HEK293 (cell line): ENCODE measurements at regions of chr14 and their contacts with region 1.

Region 1: DNA sequence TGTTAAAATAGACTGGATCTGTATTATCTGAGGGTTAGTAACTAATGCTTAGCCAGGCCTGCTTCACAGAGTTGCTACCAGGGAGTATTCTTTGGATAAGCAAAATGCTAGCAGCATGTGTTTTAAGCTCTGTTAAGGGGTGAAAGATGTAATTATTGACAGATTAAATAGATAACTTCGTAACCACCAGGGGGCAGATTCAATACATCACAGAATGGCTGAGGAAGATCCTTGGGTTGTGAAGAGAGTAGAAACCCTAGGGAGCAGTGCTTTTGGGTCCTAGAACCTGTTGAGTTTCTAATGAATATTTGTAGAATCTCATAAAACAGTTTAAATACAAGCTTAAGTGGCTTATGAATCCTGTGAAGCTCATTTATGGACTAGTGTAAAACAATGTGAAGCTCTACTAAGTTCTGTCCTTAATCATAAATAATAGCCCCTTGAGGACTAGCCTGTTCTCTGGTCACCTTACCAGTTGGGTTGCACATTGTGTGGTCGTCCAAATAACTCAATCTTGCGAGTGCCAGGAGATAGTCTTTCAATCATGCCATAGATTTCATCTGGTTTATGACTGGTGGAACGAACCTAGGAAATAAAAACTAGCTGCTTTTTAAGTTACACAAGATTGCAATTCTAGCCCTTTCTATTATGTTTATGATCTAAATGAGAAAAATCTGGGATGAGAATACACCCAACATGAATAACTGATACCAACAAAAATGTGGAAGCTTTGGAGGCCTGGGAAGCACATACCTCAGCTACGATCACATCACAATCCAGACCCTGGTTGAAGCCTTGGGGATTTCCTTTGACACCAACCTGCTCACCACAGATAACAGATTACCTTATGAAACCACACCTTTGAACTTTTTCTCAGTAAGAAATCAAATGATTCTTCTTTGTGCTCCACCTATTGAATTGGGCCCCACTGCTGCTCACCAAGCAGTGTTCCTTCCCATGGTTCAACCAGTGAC is 12.3 kb downstream of the METTL3 start:
- H3K4me3 ChIP-seq: no peak overlapping the region
- H3K27ac ChIP-seq: no peak overlapping the region
- H3K4me1 ChIP-seq: no peaks in the 10 kb centered on the region
- CTCF ChIP-seq: no peak

Region 2: GRCh38 chr14:21486640-21487087 is 12.2 kb before region 1 on chr14:
- CTCF ChIA-PET with region 1: interaction called, 15 read pairs
- POLR2A ChIA-PET with region 1: interaction called, 4 read pairs
- H3K4me3 ChIP-seq: no peak overlapping the region
- H3K27ac ChIP-seq: no peak overlapping the region
- H3K4me1 ChIP-seq: no peaks in the 10 kb centered on the region
- CTCF ChIP-seq: no peak

Region 3: DNA sequence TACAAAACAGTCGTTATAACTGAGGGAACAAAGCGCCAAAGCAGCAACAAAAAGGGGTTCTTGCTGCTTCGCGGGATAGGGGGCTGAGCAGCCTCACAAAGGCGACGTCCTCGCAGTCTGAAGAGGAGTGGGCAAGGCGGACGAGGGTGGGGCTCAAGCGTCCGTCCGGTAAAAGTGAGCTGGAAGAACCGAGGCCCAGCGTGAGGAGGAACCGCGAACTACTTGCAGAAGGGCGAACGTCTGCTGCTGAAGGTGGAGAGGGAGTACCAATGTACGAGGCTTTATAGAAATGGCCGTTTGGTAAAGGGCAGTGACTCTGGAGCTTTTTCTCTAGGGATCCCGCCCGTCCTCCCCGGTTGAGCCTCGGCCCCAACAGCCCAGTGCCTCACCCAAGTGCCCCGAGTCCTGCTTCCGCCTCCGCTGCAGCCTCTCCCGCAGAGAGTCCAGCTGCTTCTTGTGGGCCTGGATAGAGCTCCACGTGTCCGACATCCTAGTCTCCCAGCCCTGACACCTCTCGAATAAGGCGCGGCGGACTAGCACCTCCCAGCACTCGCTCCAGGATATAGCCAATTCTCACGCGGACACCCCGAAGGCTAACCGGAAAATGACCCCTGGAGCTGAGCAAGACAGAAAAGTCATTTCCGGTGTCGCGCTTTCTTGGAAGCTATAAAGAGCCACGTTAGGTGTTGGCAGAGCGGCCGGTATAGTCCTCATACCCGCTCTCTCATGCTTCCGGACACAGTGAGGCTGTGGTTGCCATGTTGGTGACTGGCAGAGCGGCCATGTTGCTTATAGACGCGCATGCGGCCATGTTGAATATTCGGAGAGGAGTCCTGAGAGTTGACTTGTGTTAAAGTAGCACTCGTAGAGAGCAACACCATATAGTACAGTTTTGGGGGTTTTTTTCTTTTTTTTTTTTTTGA is 12.2 kb after region 1 on chr14 and contains the start of gene METTL3:
- CTCF ChIA-PET with region 1: interaction called, 21 read pairs
- POLR2A ChIA-PET with region 1: interaction called, 10 read pairs
- H3K4me3 ChIP-seq: peak within 1 kb of the TSS; percentile 77
- H3K27ac ChIP-seq: peak within 1 kb of the TSS; percentile 72
- H3K4me1 ChIP-seq: 0 out of 2 replicates have a peak, but pooled peaks cover 4% of the 10 kb centered on the region
- CTCF ChIP-seq: peak; percentile 26; the same call in 1 of the 2 replicates

Region 4: GRCh38 chr14:21557084-21557901 is 58.5 kb after region 1 on chr14:
- CTCF ChIA-PET with region 1: interaction called, 72 read pairs
- POLR2A ChIA-PET with region 1: interaction called, 5 read pairs
- H3K4me3 ChIP-seq: peak overlapping the region; percentile 20
- H3K27ac ChIP-seq: no peak overlapping the region
- H3K4me1 ChIP-seq: no peaks in the 10 kb centered on the region
- CTCF ChIP-seq: peak; percentile 59